ENCODE measurements at regions of chr12 and their contacts with region 1.

Region 1: GRCh38 chr12:13211859-13212664 is 15.5 kb downstream of the EMP1 start:
- DNase-seq: peak; percentile 88

Region 2: GRCh38 chr12:12999959-13000615 is 212.0 kb before region 1 on chr12 and contains the start of gene HEBP1:
- in situ Hi-C with region 1: loop called (anchors 10 kb)
- DNase-seq: peak; percentile 90
- total RNA-seq, gene HEBP1: 7.8 and 7.9 TPM in 2 replicates